Tibial artery (tissue), 4 donors: ENCODE measurements at regions of chr1 and their contacts with region 1.

Region 1: GRCh38 chr1:17696417-17697301 is 58.5 kb upstream of the ACTL8 start:
- DNase-seq: no peak
- H3K4me3 ChIP-seq: no peak overlapping the region
- H3K27ac ChIP-seq: no peak overlapping the region
- H3K4me1 ChIP-seq: peaks cover 0 to 3% (median 0%) of the 10 kb centered on the region in 4 donors
- H3K27me3 ChIP-seq: no peaks in the 10 kb centered on the region
- CTCF ChIP-seq: no peak

Region 2: GRCh38 chr1:17802164-17802563 is 105.5 kb after region 1 on chr1:
- intact Hi-C with region 1: no loop called
- DNase-seq: no peak
- H3K4me3 ChIP-seq: no peak overlapping the region
- H3K27ac ChIP-seq: no peak overlapping the region
- H3K4me1 ChIP-seq: no peaks in the 10 kb centered on the region
- H3K27me3 ChIP-seq: peaks cover 0 to 60% of the 10 kb centered on the region in 2 donors
- CTCF ChIP-seq: no peak

Region 3: DNA sequence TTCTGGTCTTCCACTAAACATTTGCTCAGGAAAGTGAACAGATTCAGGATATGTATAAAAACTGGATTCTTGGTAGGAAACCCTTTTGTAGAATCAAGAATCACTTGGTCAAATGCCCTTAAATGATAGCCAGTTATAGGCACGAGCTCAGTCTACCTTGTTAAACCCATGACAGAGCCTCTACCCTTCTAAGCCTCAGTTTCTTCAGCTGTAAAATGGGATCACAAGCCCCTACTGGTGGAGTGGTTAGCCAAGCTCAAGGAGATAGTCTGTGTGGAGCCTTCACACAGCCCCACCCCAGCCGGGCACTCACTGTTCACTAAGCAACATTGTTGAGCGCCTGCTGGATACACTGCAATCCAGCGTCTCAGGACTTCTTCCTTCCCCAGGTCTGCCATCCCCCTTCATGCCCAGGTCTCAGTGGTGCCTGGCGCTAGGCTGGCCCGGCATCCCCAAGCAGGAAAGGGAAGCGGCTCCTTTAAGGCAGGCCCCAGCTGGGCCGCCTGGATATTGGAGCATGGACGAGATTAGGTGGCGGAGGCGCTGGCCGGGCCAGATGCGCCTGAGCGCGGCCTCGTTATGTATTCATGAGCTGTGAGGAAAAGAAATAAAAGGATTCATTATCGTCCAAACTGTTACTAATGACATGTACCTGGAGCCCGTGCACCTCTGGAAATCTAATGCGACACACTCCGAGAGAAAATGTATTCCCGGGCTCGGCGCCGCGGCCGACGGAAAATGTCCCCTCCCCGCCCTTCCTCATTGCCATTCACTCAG is 1087.2 kb after region 1 on chr1:
- intact Hi-C with region 1: no loop called
- DNase-seq: no peak
- H3K4me3 ChIP-seq: no peak overlapping the region
- H3K27ac ChIP-seq: no peak overlapping the region
- H3K4me1 ChIP-seq: no peaks in the 10 kb centered on the region
- H3K27me3 ChIP-seq: peaks cover 0 to 42% of the 10 kb centered on the region in 2 donors
- CTCF ChIP-seq: no peak

Region 4: GRCh38 chr1:19209990-19210771 is 1513.5 kb after region 1 on chr1 and contains the start of gene UBR4:
- intact Hi-C with region 1: loop called (anchors 10 kb)
- DNase-seq: peak; percentile 89 to 96
- H3K4me3 ChIP-seq: peak within 1 kb of the TSS; percentile 95 to 97
- H3K27ac ChIP-seq: peak within 1 kb of the TSS; percentile 95 to 97
- H3K4me1 ChIP-seq: peaks cover 0 to 53% (median 32%) of the 10 kb centered on the region in 4 donors
- H3K27me3 ChIP-seq: no peaks in the 10 kb centered on the region
- CTCF ChIP-seq: no peak